Activated CD4-positive, alpha-beta memory T cell treated with anti-CD3 and anti-CD28 coated beads for 36 hours (primary cell): ENCODE measurements at regions of chr3 and their contacts with region 1.

Region 1: GRCh38 chr3:10738688-10739372 is 77.2 kb upstream of the SLC6A11 start:
- DNase-seq: peak; percentile 80
- H3K4me3 Mint-ChIP-seq: no peak overlapping the region
- H3K27ac Mint-ChIP-seq: no peak overlapping the region
- H3K4me1 Mint-ChIP-seq: peaks cover 2% of the 10 kb centered on the region
- H3K27me3 Mint-ChIP-seq: peaks cover 35% of the 10 kb centered on the region

Region 2: GRCh38 chr3:10344147-10344943 is 394.5 kb before region 1 on chr3:
- CTCF ChIA-PET with region 1: interaction called, 48 read pairs
- POLR2A ChIA-PET with region 1: no interaction called
- intact Hi-C with region 1: loop called (anchors 2 kb)
- DNase-seq: peak; percentile 68
- H3K4me3 Mint-ChIP-seq: no peak overlapping the region
- H3K27ac Mint-ChIP-seq: no peak overlapping the region
- H3K4me1 Mint-ChIP-seq: no peaks in the 10 kb centered on the region
- H3K27me3 Mint-ChIP-seq: peaks cover 1% of the 10 kb centered on the region

Region 3: GRCh38 chr3:10417849-10418248 is 321.0 kb before region 1 on chr3:
- CTCF ChIA-PET with region 1: interaction called, 21 read pairs
- POLR2A ChIA-PET with region 1: no interaction called
- intact Hi-C with region 1: loop called (anchors 1 kb)
- DNase-seq: no peak
- H3K4me3 Mint-ChIP-seq: no peak overlapping the region
- H3K27ac Mint-ChIP-seq: no peak overlapping the region
- H3K4me1 Mint-ChIP-seq: peaks cover 8% of the 10 kb centered on the region
- H3K27me3 Mint-ChIP-seq: no peaks in the 10 kb centered on the region

Region 4: DNA sequence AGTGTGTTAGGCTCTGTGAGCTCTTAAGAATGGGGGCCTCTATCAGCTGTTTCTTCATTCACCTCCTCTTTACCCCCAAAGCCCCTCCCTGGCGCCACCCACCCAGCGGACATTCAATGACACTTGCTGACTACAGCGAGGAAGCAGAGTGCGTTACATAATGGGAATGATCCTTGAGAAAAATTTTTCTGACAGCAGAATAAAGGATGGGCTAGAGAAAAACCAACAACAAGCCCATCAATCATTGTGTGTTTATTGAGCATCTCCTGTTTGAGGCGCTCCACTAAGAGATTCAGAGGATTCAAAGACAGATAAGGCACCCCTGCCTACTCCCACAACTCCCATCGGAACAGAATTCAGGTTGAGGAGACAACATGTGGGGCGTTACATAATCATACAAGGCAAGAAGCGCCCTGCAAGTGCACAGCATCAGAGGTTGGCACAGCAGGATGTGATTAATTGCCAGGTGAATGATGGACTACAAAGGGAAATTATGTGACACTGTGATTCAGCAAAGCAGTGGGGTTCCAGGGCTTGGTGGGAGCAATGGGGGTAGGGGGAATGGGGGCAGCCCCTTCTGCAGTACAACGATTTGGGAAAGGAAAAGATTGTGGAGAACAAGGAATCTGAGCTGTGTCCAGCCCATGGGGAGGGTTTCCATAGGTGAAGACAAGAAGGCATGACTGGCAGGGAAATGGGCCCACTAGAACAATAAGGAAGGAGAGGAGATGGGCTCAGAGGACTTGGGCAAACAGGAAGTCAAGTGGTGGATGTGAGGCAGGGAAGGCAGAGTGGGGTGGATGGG is 92.1 kb before region 1 on chr3:
- CTCF ChIA-PET with region 1: no interaction called
- POLR2A ChIA-PET with region 1: no interaction called
- intact Hi-C with region 1: no loop called
- DNase-seq: no peak
- H3K4me3 Mint-ChIP-seq: no peak overlapping the region
- H3K27ac Mint-ChIP-seq: no peak overlapping the region
- H3K4me1 Mint-ChIP-seq: no peaks in the 10 kb centered on the region
- H3K27me3 Mint-ChIP-seq: peaks cover 1% of the 10 kb centered on the region

Region 5: DNA sequence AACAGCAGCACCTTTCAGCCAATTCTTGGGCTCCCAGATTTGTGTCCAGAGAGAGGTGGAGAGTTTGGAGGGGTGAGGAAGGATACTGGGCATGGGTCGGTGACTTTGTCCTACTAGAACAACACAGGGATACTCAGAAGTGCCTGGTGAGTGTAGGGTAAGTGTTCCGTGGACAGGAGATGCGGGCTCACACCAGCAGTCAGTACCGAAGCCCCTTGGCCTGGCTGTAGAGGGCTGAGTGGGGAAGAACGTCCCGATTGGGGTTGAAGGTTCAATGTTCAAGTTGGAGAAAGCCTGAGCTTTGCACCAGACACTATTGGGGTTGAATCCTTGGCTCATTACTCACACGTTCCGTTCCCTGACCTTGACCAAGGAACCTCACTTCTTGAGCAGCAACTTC is 36.4 kb after region 1 on chr3:
- CTCF ChIA-PET with region 1: no interaction called
- POLR2A ChIA-PET with region 1: no interaction called
- intact Hi-C with region 1: no loop called
- DNase-seq: no peak
- H3K4me3 Mint-ChIP-seq: no peak overlapping the region
- H3K27ac Mint-ChIP-seq: no peak overlapping the region
- H3K4me1 Mint-ChIP-seq: no peaks in the 10 kb centered on the region
- H3K27me3 Mint-ChIP-seq: peaks cover 24% of the 10 kb centered on the region